ENCODE measurements at regions of chr6 and their contacts with region 1.

Region 1: DNA sequence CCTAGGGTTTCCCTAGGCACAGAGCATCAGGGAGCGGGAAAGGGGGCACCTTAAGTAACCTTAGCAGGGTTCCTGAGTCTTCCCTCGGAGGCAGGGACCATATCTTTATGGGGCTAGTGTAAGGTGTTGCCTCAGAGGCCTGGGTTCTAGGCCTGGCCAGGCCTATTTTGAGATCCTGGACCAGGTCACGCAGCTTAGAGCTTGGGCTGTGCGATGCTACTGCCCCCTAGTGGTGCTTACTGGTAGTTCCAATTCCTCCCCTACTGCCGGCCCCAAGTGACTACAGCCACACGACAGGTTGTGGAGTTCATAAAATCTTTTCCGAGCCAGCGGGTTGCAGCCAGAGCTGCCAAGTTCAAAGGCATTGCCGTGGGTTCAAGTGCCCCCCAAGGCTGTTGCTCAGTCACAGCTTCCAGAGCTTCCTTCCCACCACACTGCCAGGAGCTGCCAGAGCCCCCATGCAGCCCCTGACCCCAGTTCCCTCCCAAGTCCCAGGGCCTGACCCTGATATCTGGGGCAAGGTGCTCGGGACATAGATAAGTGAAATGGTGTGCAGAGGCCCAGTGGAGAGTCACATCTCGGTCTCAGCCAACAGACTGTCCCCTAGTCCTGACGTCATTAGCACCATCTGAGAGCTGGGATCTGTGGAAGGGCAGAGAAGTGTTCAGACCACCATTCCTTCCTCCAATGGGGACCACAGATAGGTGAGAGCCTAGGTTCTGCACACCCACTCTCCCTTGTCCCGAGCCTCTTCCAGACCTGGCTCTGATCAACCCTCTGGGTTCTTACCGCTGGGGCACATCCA is 3.3 kb downstream of the LRRC73 start:
- DNase-seq: peak; percentile 84 to 95
- H3K4me3 ChIP-seq: no peak overlapping the region
- H3K27ac ChIP-seq: no peak overlapping the region
- H3K4me1 ChIP-seq: peaks cover 27 to 41% (median 34%) of the 10 kb centered on the region in 4 donors
- H3K27me3 ChIP-seq: peaks cover 0 to 28% (median 11%) of the 10 kb centered on the region in 3 donors
- CTCF ChIP-seq: peak in 6 of 7 experiments; percentile 87 to 97 (median 94)
- EP300 ChIP-seq: no peak
- POLR2A ChIP-seq: no peak

Region 2: DNA sequence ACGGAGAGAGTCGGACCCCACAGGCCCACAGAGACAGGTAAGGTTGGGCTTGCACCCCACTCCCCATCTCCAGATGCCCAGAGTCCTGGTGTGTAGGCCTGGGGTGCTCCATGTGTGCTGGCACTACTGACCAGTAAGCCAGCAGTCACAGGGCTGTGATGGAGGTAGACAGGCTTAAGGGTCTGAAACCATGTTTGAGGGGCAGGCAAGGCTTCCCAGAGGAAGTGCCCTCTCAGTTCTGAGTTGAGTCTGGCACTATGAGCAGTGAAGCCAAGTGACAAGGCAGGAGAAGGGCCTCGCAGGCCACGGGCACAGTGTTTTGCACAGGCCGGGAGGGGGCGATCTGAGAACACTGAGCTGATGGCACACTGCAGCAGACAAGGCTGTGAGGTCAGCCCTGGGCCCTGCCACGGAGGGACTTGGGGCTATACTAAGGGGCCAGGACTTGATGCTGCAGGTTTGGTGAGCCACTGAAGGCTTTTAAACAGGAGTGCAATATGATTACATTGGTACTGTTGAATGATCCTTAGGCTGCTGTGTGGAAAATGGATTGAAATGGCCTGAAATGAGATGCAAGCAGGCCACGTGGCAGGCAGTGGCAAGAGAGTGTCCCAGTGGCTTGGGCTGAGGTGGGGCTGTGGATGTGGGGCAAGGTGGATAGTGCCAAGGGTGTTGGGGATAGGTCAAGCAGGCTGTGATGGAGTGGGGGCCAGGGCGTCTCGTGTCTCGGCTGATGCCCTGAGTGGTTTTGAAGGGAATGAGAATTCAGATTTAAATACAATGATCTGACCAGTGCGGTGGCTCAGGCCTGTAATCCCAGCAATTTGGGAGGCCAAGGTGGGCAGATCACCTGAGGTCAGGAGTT is 243.3 kb before region 1 on chr6:
- intact Hi-C with region 1: loop called (anchors 10 kb)
- DNase-seq: peak; percentile 82 to 92
- H3K4me3 ChIP-seq: no peak overlapping the region
- H3K27ac ChIP-seq: no peak overlapping the region
- H3K4me1 ChIP-seq: peaks cover 6 to 14% (median 11%) of the 10 kb centered on the region in 4 donors
- H3K27me3 ChIP-seq: peaks cover 0 to 16% (median 0%) of the 10 kb centered on the region in 3 donors
- CTCF ChIP-seq: peak in 5 of 7 experiments; percentile 48 to 74 (median 64)
- EP300 ChIP-seq: no peak
- POLR2A ChIP-seq: peak in 1 of 4 donors; percentile 9

Region 3: DNA sequence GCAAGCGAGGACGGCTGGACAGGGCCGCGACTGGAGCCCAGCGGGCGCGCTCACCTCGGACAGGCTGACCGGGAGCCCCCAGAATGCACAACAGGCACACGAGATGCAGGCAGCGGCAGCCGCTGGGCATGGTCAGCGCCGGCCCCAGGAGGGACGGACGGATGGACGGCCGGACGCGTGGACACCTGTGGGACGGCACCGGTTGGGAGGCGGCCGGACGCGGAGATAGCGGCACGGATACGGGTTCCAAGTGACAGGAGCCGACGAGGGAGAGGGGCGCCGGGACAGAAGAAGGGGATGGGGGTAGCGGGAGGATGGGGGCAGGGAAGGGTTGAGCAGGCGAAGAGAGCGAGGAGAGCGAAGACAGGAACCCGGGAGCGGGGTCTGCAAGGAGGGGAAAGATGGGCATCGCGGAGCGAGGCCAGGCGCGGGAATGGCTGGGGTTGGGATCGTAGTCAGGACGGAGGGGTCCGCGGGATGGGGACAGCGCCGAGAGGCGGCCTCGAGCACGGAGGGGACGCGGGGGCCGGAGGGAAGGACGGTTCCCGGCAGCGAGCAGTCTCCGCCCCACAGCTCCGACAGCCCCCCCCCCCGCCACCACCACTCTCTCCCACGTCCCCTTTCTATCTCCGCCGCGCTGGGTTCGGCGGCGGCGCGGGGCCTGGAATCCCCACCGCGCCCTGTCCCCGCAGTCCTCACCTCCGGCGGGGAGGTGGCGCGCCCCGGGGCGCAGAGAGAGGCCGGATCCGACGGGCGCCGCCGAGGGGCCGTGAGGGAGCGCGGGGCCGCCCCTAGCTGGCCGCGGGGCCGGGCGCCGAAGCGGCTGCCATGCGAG is 52.0 kb before region 1 on chr6:
- intact Hi-C with region 1: loop called (anchors 5 kb)
- DNase-seq: peak; percentile 88 to 93
- H3K4me3 ChIP-seq: peak overlapping the region; percentile 49 to 68 (median 58)
- H3K27ac ChIP-seq: peak overlapping the region in 1 of 5 donors; percentile 43
- H3K4me1 ChIP-seq: peaks cover 16 to 22% (median 19%) of the 10 kb centered on the region in 4 donors
- H3K27me3 ChIP-seq: peaks cover 9 to 52% (median 24%) of the 10 kb centered on the region in 3 donors
- CTCF ChIP-seq: peak in 2 of 7 experiments; percentile 16 to 48
- EP300 ChIP-seq: no peak
- POLR2A ChIP-seq: no peak

Measured in stomach (tissue), 19 donors.